GM12878 (cell line): ENCODE measurements at regions of chr20 and their contacts with region 1.

Region 1: DNA sequence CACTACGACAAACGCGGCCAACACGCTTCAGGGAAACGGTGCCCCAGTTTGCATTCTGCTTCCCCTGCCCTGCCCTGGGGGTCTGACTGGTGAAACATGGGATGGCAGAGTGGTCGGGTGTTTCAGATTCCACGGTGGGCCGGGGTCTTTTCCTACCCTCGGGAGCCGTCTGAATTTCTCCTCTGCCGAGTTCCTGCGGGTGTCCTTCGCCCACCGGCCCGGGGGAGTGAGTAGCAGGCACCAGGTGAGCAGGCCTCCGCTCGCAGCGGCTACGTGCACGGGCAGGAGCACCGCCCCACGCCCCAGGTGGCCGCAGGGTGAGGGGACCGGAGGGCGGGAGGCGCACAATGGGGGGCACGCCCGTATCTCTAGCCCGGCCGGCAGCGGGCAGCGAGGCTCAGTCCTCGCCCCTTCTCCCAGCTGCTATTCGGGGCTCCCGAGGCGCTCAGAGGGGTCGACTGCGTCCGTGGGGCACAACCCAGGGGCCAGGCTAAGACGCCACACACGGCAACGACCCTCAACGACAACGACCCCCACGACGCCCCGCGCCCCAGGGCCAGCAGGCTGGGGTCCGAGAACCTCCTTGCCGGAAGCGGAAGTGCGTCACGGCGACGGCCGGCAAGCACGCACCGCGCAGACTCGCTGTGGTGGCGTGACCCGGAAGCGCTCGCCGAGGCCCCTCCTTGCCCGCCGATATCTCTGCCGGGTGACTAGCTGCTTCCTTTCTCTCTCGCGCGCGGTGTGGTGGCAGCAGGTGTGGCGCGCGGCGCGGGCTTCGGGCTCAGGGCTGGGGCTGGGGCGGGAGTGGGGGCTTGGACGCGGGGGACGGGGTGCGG is at the start of gene RPS21:
- DNase-seq: peak; percentile 54
- ATAC-seq: peak; percentile 92
- H3K4me3 ChIP-seq: peak within 1 kb of the TSS; percentile 100
- H3K27ac ChIP-seq: peak within 1 kb of the TSS; percentile 93
- H3K4me1 ChIP-seq: peaks cover 4% of the 10 kb centered on the region
- H3K27me3 ChIP-seq: no peaks in the 10 kb centered on the region
- CTCF ChIP-seq: no peak
- EP300 ChIP-seq: no peak
- POLR2A ChIP-seq: peak; percentile 94
- RAD21 ChIP-seq: no peak
- polyA plus RNA-seq, gene RPS21: 3,290 to 4,046 TPM

Region 2: DNA sequence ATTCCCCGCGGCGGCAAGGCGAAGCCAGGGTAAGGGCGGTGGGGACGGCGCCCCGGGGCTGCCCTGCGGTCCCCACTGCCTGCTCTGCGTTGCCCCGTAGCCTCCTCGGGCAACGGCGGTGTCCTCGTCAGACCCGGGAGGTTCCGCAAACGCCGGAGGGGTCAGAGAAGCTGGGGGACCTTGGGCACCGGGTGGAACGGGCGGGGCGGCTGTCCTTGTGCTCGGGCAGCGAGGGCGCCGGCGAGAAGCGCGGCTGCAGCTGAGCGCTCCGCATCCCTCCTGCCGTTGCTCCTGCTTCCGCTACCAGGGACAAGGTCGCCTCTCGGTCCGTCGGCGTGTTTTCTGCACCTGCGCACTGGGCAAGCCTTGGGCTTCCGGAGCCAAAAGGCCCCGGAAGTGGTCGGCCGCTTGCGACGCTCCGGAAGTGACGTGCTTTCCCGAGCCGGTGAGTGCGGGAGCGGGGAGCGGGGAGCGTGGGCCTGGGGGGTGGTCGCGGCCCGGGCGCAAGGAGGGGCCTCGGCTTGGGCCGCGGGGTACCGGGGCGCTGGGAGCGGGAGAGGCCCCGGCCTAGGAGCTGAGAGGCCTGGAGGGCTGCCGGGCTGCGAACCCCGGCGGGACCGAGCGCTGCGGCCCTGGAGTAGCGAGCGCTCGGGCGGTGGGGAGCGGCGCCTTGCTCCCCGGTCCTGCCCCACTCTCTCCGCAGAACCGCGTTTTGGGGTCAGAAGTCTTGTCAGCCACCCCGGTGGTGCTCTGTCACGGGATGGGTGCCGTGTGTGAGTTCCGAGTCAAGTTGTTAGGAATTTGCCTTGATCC is 203.8 kb before region 1 on chr20 and contains the start of gene MTG2:
- CTCF ChIA-PET with region 1: no interaction called
- POLR2A ChIA-PET with region 1: no interaction called
- RAD21 ChIA-PET with region 1: no interaction called
- SMC1A ChIA-PET with region 1: no interaction called
- in situ Hi-C with region 1: no loop called
- intact Hi-C with region 1: loop called (anchors 10 kb)
- DNase-seq: peak; percentile 79
- ATAC-seq: peak; percentile 97
- H3K4me3 ChIP-seq: peak within 1 kb of the TSS; percentile 100
- H3K27ac ChIP-seq: peak within 1 kb of the TSS; percentile 78
- H3K4me1 ChIP-seq: no peaks in the 10 kb centered on the region
- H3K27me3 ChIP-seq: no peaks in the 10 kb centered on the region
- CTCF ChIP-seq: no peak
- EP300 ChIP-seq: 0 out of 4 replicates have a peak, but pooled peaks of 1 of the 2 experiments have one; percentile 46
- POLR2A ChIP-seq: peak; percentile 100
- RAD21 ChIP-seq: no peak
- polyA plus RNA-seq, gene MTG2: 6.2 to 7.3 TPM

Region 3: GRCh38 chr20:62302341-62303058 is 84.1 kb before region 1 on chr20 and contains the start of gene ADRM1:
- CTCF ChIA-PET with region 1: interaction called, 38 read pairs
- POLR2A ChIA-PET with region 1: interaction called, 4 read pairs
- RAD21 ChIA-PET with region 1: interaction called, 12 read pairs
- SMC1A ChIA-PET with region 1: interaction called, 5 read pairs
- in situ Hi-C with region 1: loop called (anchors 5 kb)
- intact Hi-C with region 1: loop called (anchors 1 kb)
- DNase-seq: peak; percentile 76
- ATAC-seq: peak; percentile 93
- H3K4me3 ChIP-seq: peak within 1 kb of the TSS; percentile 82
- H3K27ac ChIP-seq: peak within 1 kb of the TSS; percentile 90
- H3K4me1 ChIP-seq: peaks cover 10% of the 10 kb centered on the region
- H3K27me3 ChIP-seq: no peaks in the 10 kb centered on the region
- CTCF ChIP-seq: peak; percentile 80 to 99 (median 92)
- EP300 ChIP-seq: peak in 1 of 2 experiments; percentile 53; a peak in 1 of 4 replicates
- POLR2A ChIP-seq: peak; percentile 91
- RAD21 ChIP-seq: peak; percentile 64
- polyA plus RNA-seq, gene ADRM1: 3.4 to 13.6 TPM

Region 4: DNA sequence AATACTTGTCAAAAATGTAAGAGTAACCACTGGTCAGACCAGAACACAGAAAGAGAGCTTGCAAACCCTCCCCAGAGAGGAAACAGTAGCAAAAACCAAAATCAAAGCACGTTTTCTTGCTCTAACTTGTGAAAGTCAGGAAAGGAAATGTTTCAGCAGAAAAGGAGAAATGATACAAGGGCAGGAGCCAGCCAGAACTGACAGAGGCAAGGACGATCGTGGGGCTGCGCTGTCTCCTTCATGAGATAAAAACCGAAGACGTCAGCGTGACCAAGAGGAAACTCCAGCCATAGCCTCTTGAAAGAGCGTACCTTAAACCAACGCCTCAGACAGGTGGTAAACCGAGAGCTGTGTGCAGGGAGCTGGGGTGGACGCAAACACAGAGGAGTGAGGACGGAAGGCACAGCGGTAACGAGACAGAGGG is 46.9 kb before region 1 on chr20:
- CTCF ChIA-PET with region 1: interaction called, 12 read pairs
- POLR2A ChIA-PET with region 1: no interaction called
- RAD21 ChIA-PET with region 1: no interaction called
- SMC1A ChIA-PET with region 1: interaction called, 3 read pairs
- in situ Hi-C with region 1: no loop called
- intact Hi-C with region 1: loop called (anchors 5 kb)
- DNase-seq: peak; percentile 89
- ATAC-seq: peak; percentile 90
- H3K4me3 ChIP-seq: peak overlapping the region; percentile 68; the same call in 1 of the 2 replicates
- H3K27ac ChIP-seq: peak overlapping the region; percentile 81
- H3K4me1 ChIP-seq: peaks cover 37% of the 10 kb centered on the region
- H3K27me3 ChIP-seq: no peaks in the 10 kb centered on the region
- CTCF ChIP-seq: no peak
- EP300 ChIP-seq: no peak
- POLR2A ChIP-seq: 0 out of 2 replicates have a peak, but pooled peaks have one; percentile 49
- RAD21 ChIP-seq: no peak